ENCODE measurements at regions of chr12 and their contacts with region 1.

Region 1: GRCh38 chr12:92145731-92146496 is at the start of gene BTG1:
- DNase-seq: peak; percentile 96 to 100
- ATAC-seq: peak; percentile 89 to 96 (median 90)
- H3K4me3 ChIP-seq: peak within 1 kb of the TSS; percentile 83 to 98 (median 90)
- H3K27ac ChIP-seq: peak within 1 kb of the TSS; percentile 89 to 99 (median 98)
- H3K4me1 ChIP-seq: peaks cover 0 to 31% (median 8%) of the 10 kb centered on the region in 9 donors
- H3K27me3 ChIP-seq: no peaks in the 10 kb centered on the region
- CTCF ChIP-seq: no peak
- total RNA-seq, gene BTG1: 54.4 to 127 (median 71.3) TPM

Region 2: DNA sequence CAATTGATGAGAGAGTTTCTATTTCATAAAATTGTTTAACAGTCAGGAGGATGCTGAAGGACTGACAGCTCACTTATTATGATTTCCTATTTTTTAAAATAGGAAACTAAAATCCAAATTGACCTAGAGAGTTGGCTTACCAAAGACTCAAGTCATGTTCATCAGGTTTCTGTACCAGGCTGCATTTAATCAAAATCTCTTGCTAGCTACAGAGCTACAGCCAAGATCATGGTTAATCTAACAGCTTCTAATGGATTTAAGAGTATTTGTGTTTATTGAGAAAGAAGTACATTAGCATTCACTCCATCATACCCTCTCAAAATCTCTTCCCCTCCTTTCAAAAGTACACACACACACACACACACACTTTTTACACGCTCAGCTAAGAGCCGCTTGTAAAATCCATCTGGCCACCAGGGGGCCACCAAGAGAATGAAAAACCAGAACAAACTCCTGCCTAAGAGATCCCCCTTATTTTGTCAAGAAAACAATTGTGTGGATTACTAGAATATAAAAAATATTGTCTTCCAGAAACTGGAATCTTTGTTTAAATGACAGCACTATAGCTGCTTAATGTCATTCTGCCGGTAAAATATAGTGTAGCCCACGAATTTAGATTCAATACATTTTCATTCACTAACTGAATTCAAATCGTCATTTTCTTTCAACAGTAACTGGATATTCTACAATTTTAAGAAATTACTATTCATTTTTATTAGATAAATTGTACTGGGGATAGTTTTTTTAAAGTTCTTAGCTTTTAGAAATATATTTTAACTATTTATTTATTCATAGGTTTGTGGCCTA is 334.2 kb before region 1 on chr12:
- intact Hi-C with region 1: loop called in 9 of 10 experiments (anchors 1 to 10 kb)
- DNase-seq: peak; percentile 70 to 71
- ATAC-seq: peak in 6 of 8 donors; percentile 65 to 84 (median 75)
- H3K4me3 ChIP-seq: no peak overlapping the region
- H3K27ac ChIP-seq: peak overlapping the region in 1 of 10 donors; percentile 11
- H3K4me1 ChIP-seq: peaks cover 0 to 8% (median 0%) of the 10 kb centered on the region in 9 donors
- H3K27me3 ChIP-seq: no peaks in the 10 kb centered on the region
- CTCF ChIP-seq: peak; percentile 71 to 90 (median 84)

Region 3: DNA sequence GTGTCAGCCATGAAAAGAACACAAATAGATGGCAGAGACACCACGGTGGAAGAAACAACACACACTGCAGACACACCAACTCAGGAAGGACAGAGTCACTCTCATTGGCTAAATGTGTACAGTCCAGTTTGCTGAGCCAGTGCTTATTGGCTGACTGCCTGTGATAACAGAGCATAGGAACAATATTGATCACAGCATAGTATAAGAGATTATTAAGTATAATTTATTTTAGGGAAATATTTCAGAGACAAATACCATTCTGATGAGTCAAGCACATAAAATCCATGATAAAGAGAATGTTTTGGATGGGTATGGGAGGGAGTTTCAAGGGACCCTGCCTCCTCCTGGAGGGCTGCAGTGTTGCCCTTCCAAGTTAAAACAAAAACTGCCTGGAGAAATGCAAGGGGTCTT is 51.2 kb before region 1 on chr12:
- intact Hi-C with region 1: no loop called
- DNase-seq: no peak
- ATAC-seq: no peak
- H3K4me3 ChIP-seq: no peak overlapping the region
- H3K27ac ChIP-seq: no peak overlapping the region
- H3K4me1 ChIP-seq: peaks cover 0 to 19% (median 0%) of the 10 kb centered on the region in 9 donors
- H3K27me3 ChIP-seq: no peaks in the 10 kb centered on the region
- CTCF ChIP-seq: no peak

Region 4: DNA sequence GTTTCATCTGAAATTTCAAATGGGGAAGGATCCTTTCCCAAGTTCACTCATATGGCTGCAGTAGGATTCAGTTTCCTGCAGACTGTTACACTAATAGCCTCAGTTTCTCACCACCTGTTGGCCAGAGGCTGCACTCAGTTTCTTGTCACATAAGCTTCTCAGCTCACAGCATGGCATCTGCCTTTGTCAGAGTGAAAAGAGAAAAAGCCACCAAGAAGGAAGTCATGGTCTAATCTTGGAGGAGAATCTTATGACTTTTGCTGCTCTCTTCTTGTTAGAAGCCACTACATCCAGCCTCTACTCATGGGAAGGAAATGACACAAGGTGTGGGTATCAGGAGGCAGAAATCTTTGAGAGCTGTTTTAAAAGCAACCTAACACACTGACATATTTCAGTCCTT is 39.1 kb after region 1 on chr12:
- intact Hi-C with region 1: no loop called
- DNase-seq: no peak
- ATAC-seq: no peak
- H3K4me3 ChIP-seq: no peak overlapping the region
- H3K27ac ChIP-seq: peak overlapping the region in 1 of 10 donors; percentile 39
- H3K4me1 ChIP-seq: peaks cover 0 to 5% (median 0%) of the 10 kb centered on the region in 9 donors
- H3K27me3 ChIP-seq: no peaks in the 10 kb centered on the region
- CTCF ChIP-seq: no peak

Region 5: DNA sequence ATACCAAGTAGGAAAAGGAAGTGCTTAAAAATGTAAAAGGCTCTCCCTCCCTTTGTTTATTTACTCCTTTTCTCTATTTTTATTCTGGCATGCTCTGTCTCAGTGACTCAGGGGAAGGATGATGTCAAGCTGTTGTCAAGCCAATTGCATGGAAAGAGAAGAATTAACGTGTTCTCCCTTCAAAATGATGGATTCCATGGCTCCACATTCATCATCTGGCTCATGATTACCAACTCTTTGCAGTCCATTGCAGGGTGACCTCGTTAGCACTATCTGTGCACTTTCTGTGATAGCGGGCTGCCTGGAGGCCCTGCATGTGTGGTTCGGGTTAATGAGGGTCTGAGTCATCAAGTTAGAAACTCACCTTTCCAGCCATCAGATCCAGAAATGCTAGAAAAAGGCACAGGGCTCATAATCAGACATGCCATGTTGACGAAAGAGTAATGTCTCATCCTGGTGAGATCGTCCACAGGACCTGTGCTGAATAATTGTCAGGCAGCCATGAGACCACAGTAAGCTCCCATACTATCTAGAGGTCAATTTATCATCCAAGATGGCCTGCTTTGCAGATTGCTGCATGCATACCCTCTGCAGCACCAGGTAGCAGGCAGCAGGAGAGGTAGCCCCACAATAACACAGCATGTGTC is 78.9 kb after region 1 on chr12:
- intact Hi-C with region 1: loop called in 1 of 10 experiments (anchors 5 kb)
- DNase-seq: peak in 1 of 2 donors; percentile 16
- ATAC-seq: peak in 7 of 8 donors; percentile 39 to 85 (median 49)
- H3K4me3 ChIP-seq: no peak overlapping the region
- H3K27ac ChIP-seq: peak overlapping the region in 1 of 10 donors; percentile 3
- H3K4me1 ChIP-seq: peaks cover 0 to 11% (median 5%) of the 10 kb centered on the region in 9 donors
- H3K27me3 ChIP-seq: no peaks in the 10 kb centered on the region
- CTCF ChIP-seq: no peak

Region 6: DNA sequence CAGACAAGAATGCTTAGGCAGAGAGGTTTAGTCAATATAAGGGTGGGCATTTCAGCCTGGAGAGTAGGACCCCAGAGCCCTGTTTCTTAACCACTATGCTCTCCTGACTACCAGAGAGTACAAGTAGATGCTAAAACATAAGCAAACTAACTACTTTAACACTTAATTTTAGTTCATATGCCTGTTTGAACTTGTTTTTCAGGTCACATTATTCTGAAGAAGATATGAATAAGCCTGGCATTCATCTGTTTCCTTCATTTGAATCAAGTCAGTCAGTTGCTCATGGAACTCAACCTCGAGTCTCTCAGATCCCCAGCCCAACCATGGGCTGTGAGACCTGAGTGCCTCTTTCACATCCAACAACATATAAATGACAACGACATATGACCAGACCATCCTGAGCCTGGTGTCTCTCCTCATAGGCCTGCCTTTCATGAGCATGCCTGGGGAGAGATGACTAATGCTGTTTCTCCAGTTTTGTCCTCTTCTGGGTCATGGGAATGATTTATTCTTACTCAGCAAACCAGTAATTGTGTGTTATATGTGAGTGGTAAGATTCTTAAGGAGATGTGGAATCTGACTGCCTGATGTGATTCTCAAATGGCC is 250.8 kb after region 1 on chr12:
- intact Hi-C with region 1: loop called in 2 of 10 experiments (anchors 5 to 10 kb)
- DNase-seq: no peak
- ATAC-seq: peak in 1 of 8 donors; percentile 42
- H3K4me3 ChIP-seq: no peak overlapping the region
- H3K27ac ChIP-seq: peak overlapping the region in 1 of 10 donors; percentile 78
- H3K4me1 ChIP-seq: peaks cover 0 to 38% (median 16%) of the 10 kb centered on the region in 9 donors
- H3K27me3 ChIP-seq: no peaks in the 10 kb centered on the region
- CTCF ChIP-seq: no peak

Region 7: GRCh38 chr12:92445253-92446082 is 299.6 kb after region 1 on chr12:
- intact Hi-C with region 1: loop called in 1 of 10 experiments (anchors 10 kb)
- DNase-seq: peak in 1 of 2 donors; percentile 63
- ATAC-seq: peak; percentile 73 to 95 (median 90)
- H3K4me3 ChIP-seq: no peak overlapping the region
- H3K27ac ChIP-seq: peak overlapping the region; percentile 18 to 85 (median 70)
- H3K4me1 ChIP-seq: peaks cover 2 to 45% (median 32%) of the 10 kb centered on the region in 9 donors
- H3K27me3 ChIP-seq: no peaks in the 10 kb centered on the region
- CTCF ChIP-seq: no peak

Region 8: DNA sequence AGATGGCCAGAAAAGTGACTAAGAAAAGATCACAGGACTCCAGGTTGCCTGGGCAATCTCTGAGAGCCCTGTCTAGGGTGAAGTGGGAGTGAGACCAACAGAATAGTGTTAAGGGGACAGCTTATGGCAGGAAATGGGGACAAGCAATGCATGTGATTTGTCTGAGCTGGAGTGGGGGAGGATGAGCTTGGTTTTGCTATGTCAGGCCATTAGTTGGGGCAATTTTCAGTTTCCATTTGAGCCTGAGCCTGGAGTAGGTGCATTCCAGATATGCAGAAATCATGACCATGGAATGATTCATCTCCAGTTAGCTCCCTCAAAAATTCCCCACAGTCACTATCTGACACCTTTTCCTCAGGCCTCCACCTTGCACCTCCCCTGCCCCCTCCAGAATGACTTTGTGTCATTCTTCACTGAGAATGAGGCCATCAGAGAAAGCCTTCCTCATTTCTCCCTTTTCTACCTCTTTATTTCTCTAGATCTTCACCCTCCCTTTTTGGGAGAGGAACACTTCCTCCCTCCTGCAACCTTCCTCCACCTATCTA is 406.0 kb after region 1 on chr12:
- intact Hi-C with region 1: loop called in 1 of 10 experiments (anchors 5 kb)
- DNase-seq: no peak
- ATAC-seq: no peak
- H3K4me3 ChIP-seq: no peak overlapping the region
- H3K27ac ChIP-seq: peak overlapping the region in 6 of 10 donors; percentile 3 to 93 (median 78)
- H3K4me1 ChIP-seq: peaks cover 8 to 60% (median 32%) of the 10 kb centered on the region in 9 donors
- H3K27me3 ChIP-seq: no peaks in the 10 kb centered on the region
- CTCF ChIP-seq: no peak

Measured in heart right ventricle (tissue), 16 donors.